GM12878 (cell line): ENCODE measurements at regions of chr3 and their contacts with region 1.

Region 1: DNA sequence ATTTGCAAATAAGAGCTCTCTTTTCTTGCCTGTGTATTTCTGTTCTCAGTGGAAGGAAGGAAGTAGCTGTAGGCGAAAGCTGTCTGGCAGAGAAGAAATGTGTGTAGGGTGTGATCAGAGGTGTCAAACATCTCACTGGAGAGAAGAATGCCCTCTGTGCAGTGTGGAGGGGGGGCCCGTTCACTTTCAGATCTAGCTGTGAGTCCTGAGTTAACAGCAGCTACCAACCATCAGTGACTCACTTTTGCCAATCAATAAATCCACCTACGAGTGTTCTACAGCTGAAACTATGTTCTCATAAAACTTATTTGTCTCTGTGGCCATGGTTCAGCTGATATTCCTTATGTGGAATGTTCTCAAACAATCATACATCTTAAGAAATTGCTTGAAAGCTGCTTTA is 103.7 kb downstream of the FRMD4B start:
- DNase-seq: no peak
- ATAC-seq: peak; percentile 96
- H3K4me3 ChIP-seq: no peak overlapping the region
- H3K27ac ChIP-seq: no peak overlapping the region
- H3K4me1 ChIP-seq: no peaks in the 10 kb centered on the region
- H3K27me3 ChIP-seq: no peaks in the 10 kb centered on the region
- CTCF ChIP-seq: no peak
- EP300 ChIP-seq: no peak; a peak in 1 of 4 replicates
- POLR2A ChIP-seq: no peak
- RAD21 ChIP-seq: no peak

Region 2: GRCh38 chr3:69181592-69182211 is 100.5 kb before region 1 on chr3:
- CTCF ChIA-PET with region 1: no interaction called
- POLR2A ChIA-PET with region 1: no interaction called
- RAD21 ChIA-PET with region 1: interaction called, 3 read pairs
- SMC1A ChIA-PET with region 1: interaction called, 11 read pairs
- in situ Hi-C with region 1: no loop called
- intact Hi-C with region 1: no loop called
- DNase-seq: no peak
- ATAC-seq: no peak
- H3K4me3 ChIP-seq: no peak overlapping the region
- H3K27ac ChIP-seq: no peak overlapping the region
- H3K4me1 ChIP-seq: no peaks in the 10 kb centered on the region
- H3K27me3 ChIP-seq: no peaks in the 10 kb centered on the region
- CTCF ChIP-seq: no peak
- EP300 ChIP-seq: no peak
- POLR2A ChIP-seq: no peak
- RAD21 ChIP-seq: no peak